ENCODE measurements at regions of chr1 and their contacts with region 1.

Region 1: GRCh38 chr1:21232044-21232443 is 55.3 kb upstream of the EIF4G3 start:
- DNase-seq: peak; percentile 38
- ATAC-seq: peak; percentile 64
- H3K4me3 Mint-ChIP-seq: no peak overlapping the region
- H3K27ac Mint-ChIP-seq: no peak overlapping the region
- H3K4me1 Mint-ChIP-seq: no peaks in the 10 kb centered on the region
- H3K27me3 Mint-ChIP-seq: no peaks in the 10 kb centered on the region
- CTCF ChIP-seq: peak; percentile 99

Region 2: DNA sequence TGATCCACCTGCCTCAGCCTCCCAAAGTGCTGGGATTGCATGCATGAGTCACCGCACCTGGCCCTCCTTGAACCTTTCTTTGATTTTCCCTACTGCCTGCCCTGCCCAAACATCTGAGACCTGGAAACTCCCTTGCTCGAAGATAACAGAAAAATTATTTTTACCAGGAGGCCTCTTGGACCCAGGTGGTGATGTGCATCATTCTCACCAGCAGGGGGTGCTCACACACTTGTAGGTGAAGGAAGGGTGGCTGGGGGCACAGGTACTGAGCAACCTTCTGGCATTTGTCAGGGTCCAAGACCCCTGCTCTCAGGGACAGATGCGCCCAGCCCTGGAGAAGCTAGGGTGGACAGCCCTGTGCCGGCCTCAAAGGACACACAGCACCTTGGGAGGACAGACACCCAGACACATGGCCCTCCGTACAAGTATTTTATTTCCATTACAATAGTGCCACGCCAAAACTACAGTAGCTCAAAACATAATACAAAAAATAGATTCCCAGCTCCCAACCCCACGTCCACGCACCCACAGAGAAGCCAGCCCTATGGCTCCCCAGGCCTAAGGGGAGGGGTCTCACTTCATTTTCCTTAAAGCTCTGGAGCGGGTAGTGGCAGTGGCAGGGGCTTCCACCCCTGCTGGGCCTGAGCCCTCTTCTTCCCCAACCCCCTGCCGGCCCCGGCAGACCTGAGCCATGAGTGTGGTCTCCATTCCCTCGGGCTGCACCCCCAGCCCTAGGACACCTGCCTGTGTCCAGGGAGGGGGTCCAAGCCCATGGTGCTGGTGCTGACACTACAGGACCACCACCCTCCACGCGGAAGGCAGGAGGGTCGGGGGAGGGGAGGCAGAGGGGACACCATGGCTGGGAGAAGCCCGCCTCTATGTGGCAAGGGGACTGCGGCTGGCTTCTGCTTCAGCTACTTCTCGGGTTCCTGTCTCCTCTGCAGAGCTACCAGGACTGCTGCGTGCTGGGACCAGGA is 14.9 kb before region 1 on chr1:
- CTCF ChIA-PET with region 1: interaction called, 26 read pairs
- POLR2A ChIA-PET with region 1: interaction called, 4 read pairs
- intact Hi-C with region 1: no loop called
- DNase-seq: peak; percentile 86
- ATAC-seq: peak; percentile 74
- H3K4me3 Mint-ChIP-seq: no peak overlapping the region
- H3K27ac Mint-ChIP-seq: no peak overlapping the region
- H3K4me1 Mint-ChIP-seq: peaks cover 2% of the 10 kb centered on the region
- H3K27me3 Mint-ChIP-seq: no peaks in the 10 kb centered on the region
- CTCF ChIP-seq: peak; percentile 84

Region 3: GRCh38 chr1:21244986-21245687 is 13.1 kb after region 1 on chr1:
- CTCF ChIA-PET with region 1: interaction called, 23 read pairs
- POLR2A ChIA-PET with region 1: interaction called, 5 read pairs
- intact Hi-C with region 1: no loop called
- DNase-seq: no peak
- ATAC-seq: no peak
- H3K4me3 Mint-ChIP-seq: no peak overlapping the region
- H3K27ac Mint-ChIP-seq: no peak overlapping the region
- H3K4me1 Mint-ChIP-seq: peaks cover 2% of the 10 kb centered on the region
- H3K27me3 Mint-ChIP-seq: no peaks in the 10 kb centered on the region
- CTCF ChIP-seq: peak; percentile 43

Region 4: GRCh38 chr1:21355956-21356355 is 123.9 kb after region 1 on chr1:
- CTCF ChIA-PET with region 1: interaction called, 14 read pairs
- POLR2A ChIA-PET with region 1: no interaction called
- intact Hi-C with region 1: no loop called
- DNase-seq: peak; percentile 56
- ATAC-seq: peak; percentile 91
- H3K4me3 Mint-ChIP-seq: no peak overlapping the region
- H3K27ac Mint-ChIP-seq: no peak overlapping the region
- H3K4me1 Mint-ChIP-seq: peaks cover 9% of the 10 kb centered on the region
- H3K27me3 Mint-ChIP-seq: no peaks in the 10 kb centered on the region
- CTCF ChIP-seq: no peak

Measured in activated CD8-positive, alpha-beta T cell treated with anti-CD3 and anti-CD28 coated beads for 36 hours (primary cell).